Activated naive CD4-positive, alpha-beta T cell treated with anti-CD3 and anti-CD28 coated beads for 36 hours (primary cell): ENCODE measurements at regions of chr19 and their contacts with region 1.

Region 1: DNA sequence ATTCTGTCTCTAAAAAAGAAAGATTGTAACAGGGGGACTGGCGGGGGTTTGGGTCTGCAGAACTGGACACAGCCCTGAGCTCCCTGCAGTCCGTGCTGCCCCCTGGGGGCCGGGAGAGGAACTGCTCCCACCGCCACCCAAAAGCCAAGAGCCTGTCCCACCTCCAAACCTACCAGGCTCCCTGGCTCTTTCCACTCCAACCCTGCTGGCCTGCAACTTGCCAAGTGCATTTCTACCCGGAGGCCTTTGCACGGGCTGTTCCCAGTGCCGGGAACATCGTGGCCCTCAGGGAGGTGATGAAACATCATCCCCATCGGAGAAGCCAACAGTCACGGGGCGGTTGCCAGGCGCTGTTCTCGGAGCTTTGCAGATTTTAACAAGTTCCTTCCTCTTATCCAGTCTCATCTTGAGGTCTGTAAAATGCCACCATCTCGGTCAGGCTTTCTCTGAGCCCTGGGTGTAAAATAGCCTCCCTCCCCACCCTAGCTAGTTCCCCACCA is 50.7 kb downstream of the SMIM24 start:
- DNase-seq: peak; percentile 85
- H3K4me3 Mint-ChIP-seq: no peak overlapping the region
- H3K27ac Mint-ChIP-seq: no peak overlapping the region
- H3K4me1 Mint-ChIP-seq: peaks cover 6% of the 10 kb centered on the region
- H3K27me3 Mint-ChIP-seq: no peaks in the 10 kb centered on the region

Region 2: GRCh38 chr19:2848616-2849015 is 581.0 kb before region 1 on chr19:
- CTCF ChIA-PET with region 1: no interaction called
- intact Hi-C with region 1: no loop called
- DNase-seq: no peak
- H3K4me3 Mint-ChIP-seq: no peak overlapping the region
- H3K27ac Mint-ChIP-seq: no peak overlapping the region
- H3K4me1 Mint-ChIP-seq: peaks cover 13% of the 10 kb centered on the region
- H3K27me3 Mint-ChIP-seq: no peaks in the 10 kb centered on the region

Region 3: GRCh38 chr19:2912306-2912705 is 517.3 kb before region 1 on chr19:
- CTCF ChIA-PET with region 1: no interaction called
- intact Hi-C with region 1: no loop called
- DNase-seq: peak; percentile 50
- H3K4me3 Mint-ChIP-seq: peak overlapping the region; percentile 11
- H3K27ac Mint-ChIP-seq: peak overlapping the region; percentile 81
- H3K4me1 Mint-ChIP-seq: peaks cover 26% of the 10 kb centered on the region
- H3K27me3 Mint-ChIP-seq: no peaks in the 10 kb centered on the region

Region 4: GRCh38 chr19:3336680-3337523 is 92.7 kb before region 1 on chr19:
- CTCF ChIA-PET with region 1: interaction called, 14 read pairs
- intact Hi-C with region 1: no loop called
- DNase-seq: no peak
- H3K4me3 Mint-ChIP-seq: no peak overlapping the region
- H3K27ac Mint-ChIP-seq: no peak overlapping the region
- H3K4me1 Mint-ChIP-seq: peaks cover 15% of the 10 kb centered on the region
- H3K27me3 Mint-ChIP-seq: no peaks in the 10 kb centered on the region

Region 5: GRCh38 chr19:3343619-3344502 is 85.8 kb before region 1 on chr19:
- CTCF ChIA-PET with region 1: interaction called, 14 read pairs
- intact Hi-C with region 1: no loop called
- DNase-seq: peak; percentile 59
- H3K4me3 Mint-ChIP-seq: no peak overlapping the region
- H3K27ac Mint-ChIP-seq: no peak overlapping the region
- H3K4me1 Mint-ChIP-seq: peaks cover 5% of the 10 kb centered on the region
- H3K27me3 Mint-ChIP-seq: no peaks in the 10 kb centered on the region